CD8-positive, alpha-beta T cell (primary cell): ENCODE measurements at regions of chr3 and their contacts with region 1.

Region 1: GRCh38 chr3:107522510-107523288 is at the start of gene BBX:
- DNase-seq: peak; percentile 83 to 98 (median 91)
- ATAC-seq: peak; percentile 91
- H3K4me3 ChIP-seq: peak within 1 kb of the TSS; percentile 77 to 86
- H3K4me3 Mint-ChIP-seq: peak within 1 kb of the TSS; percentile 99
- H3K27ac ChIP-seq: peak within 1 kb of the TSS; percentile 47 to 69
- H3K27ac Mint-ChIP-seq: peak within 1 kb of the TSS; percentile 99
- H3K4me1 ChIP-seq: peaks cover 19% of the 10 kb centered on the region
- H3K4me1 Mint-ChIP-seq: peaks cover 32% of the 10 kb centered on the region
- H3K27me3 ChIP-seq: no peaks in the 10 kb centered on the region
- H3K27me3 Mint-ChIP-seq: no peaks in the 10 kb centered on the region
- CTCF ChIP-seq: no peak
- total RNA-seq, gene BBX: 71.3 to 77.9 TPM

Region 2: GRCh38 chr3:105876780-105877327 is 1645.8 kb before region 1 on chr3:
- CTCF ChIA-PET with region 1: no interaction called
- POLR2A ChIA-PET with region 1: no interaction called
- intact Hi-C with region 1: loop called in 1 of 2 experiments (anchors 10 kb)
- DNase-seq: peak in 2 of 9 experiments; percentile 48 to 63
- ATAC-seq: peak; percentile 76
- H3K4me3 ChIP-seq: peak overlapping the region in 1 of 2 experiments; percentile 11
- H3K4me3 Mint-ChIP-seq: peak overlapping the region; percentile 74
- H3K27ac ChIP-seq: peak overlapping the region in 1 of 2 experiments; percentile 59
- H3K27ac Mint-ChIP-seq: peak overlapping the region; percentile 86
- H3K4me1 ChIP-seq: peaks cover 19% of the 10 kb centered on the region
- H3K4me1 Mint-ChIP-seq: peaks cover 31% of the 10 kb centered on the region
- H3K27me3 ChIP-seq: no peaks in the 10 kb centered on the region
- H3K27me3 Mint-ChIP-seq: no peaks in the 10 kb centered on the region
- CTCF ChIP-seq: no peak

Region 3: DNA sequence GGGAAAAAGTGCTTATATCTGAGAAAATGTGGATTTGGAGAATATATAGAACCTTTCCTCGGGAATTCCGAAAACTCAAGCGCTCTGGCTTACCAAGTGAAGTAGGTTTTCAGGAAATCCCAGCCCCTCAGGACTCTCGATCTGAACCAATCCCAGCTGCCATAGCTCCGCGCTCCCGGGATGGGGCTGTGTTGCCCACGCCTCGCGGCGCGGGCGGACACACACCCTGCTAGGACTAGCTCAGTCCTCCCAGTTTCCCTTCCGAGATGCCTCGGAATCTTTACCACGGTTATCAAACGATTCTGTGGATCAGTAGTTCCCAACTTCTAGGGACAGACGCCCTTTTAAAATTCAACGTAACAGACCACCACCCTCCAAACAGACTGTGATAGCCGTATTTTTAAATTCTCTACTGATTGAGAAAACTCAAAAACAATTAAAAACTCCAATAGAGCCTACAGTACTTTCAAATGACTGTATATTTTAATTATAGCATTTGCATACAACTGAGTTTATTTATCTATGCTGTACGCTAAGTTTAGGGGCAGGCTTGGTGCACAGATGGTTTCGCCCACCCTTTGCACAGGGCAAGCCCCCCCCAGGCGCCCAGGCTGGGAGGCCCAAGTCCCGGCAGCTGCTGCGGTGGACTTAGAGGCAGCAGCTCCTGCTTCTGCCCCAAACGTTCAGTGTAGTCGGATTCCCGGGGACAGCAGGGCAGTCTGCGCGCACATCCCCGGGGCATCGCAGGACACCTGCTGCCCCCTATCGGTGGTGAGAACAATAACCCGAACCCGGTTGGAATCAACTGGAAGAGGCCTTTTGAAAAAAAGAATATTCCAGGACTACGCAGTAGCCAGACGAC is 93.1 kb before region 1 on chr3:
- CTCF ChIA-PET with region 1: no interaction called
- POLR2A ChIA-PET with region 1: interaction called, 3 read pairs
- intact Hi-C with region 1: loop called (anchors 2 kb)
- DNase-seq: peak; percentile 19 to 78 (median 47)
- ATAC-seq: peak; percentile 66
- H3K4me3 ChIP-seq: peak overlapping the region; percentile 57 to 69
- H3K4me3 Mint-ChIP-seq: peak overlapping the region; percentile 89
- H3K27ac ChIP-seq: no peak overlapping the region
- H3K27ac Mint-ChIP-seq: peak overlapping the region; percentile 14
- H3K4me1 ChIP-seq: peaks cover 11% of the 10 kb centered on the region
- H3K4me1 Mint-ChIP-seq: peaks cover 19% of the 10 kb centered on the region
- H3K27me3 ChIP-seq: peaks cover 0 to 3% of the 10 kb centered on the region in 2 experiments
- H3K27me3 Mint-ChIP-seq: peaks cover 13% of the 10 kb centered on the region
- CTCF ChIP-seq: peak; percentile 77

Region 4: DNA sequence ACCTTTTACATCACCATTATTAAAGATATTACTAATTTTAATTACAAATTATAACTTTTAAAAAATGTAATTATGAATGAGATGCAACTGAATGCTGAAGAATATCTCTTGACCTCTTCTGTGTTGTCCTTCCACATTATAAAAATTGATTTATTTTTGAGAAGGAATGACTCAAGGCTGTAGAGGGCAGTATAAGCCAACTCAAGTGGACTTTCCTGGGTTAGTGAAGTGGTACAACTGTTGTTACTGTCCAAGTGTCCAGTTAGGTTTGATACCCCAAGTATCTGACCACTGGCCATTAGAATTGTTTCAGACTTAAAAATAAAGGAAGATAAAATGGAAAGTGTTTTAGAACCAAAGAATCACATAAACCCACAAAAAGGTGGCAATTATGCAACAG is 52.0 kb after region 1 on chr3:
- CTCF ChIA-PET with region 1: no interaction called
- POLR2A ChIA-PET with region 1: no interaction called
- intact Hi-C with region 1: loop called in 1 of 2 experiments (anchors 5 kb)
- DNase-seq: peak in 2 of 9 experiments; percentile 30 to 42
- ATAC-seq: no peak
- H3K4me3 ChIP-seq: no peak overlapping the region
- H3K4me3 Mint-ChIP-seq: no peak overlapping the region
- H3K27ac ChIP-seq: no peak overlapping the region
- H3K27ac Mint-ChIP-seq: no peak overlapping the region
- H3K4me1 ChIP-seq: peaks cover 6% of the 10 kb centered on the region
- H3K4me1 Mint-ChIP-seq: peaks cover 46% of the 10 kb centered on the region
- H3K27me3 ChIP-seq: no peaks in the 10 kb centered on the region
- H3K27me3 Mint-ChIP-seq: no peaks in the 10 kb centered on the region
- CTCF ChIP-seq: peak; percentile 29

Region 5: GRCh38 chr3:108079877-108080659 is 557.4 kb after region 1 on chr3:
- CTCF ChIA-PET with region 1: no interaction called
- POLR2A ChIA-PET with region 1: no interaction called
- intact Hi-C with region 1: loop called in 1 of 2 experiments (anchors 5 kb)
- DNase-seq: peak in 1 of 9 experiments; percentile 39
- ATAC-seq: peak; percentile 59
- H3K4me3 ChIP-seq: no peak overlapping the region
- H3K4me3 Mint-ChIP-seq: peak overlapping the region; percentile 40
- H3K27ac ChIP-seq: peak overlapping the region in 1 of 2 experiments; percentile 41
- H3K27ac Mint-ChIP-seq: peak overlapping the region; percentile 81
- H3K4me1 ChIP-seq: peaks cover 86% of the 10 kb centered on the region
- H3K4me1 Mint-ChIP-seq: peaks cover 23% of the 10 kb centered on the region
- H3K27me3 ChIP-seq: no peaks in the 10 kb centered on the region
- H3K27me3 Mint-ChIP-seq: no peaks in the 10 kb centered on the region
- CTCF ChIP-seq: no peak

Region 6: GRCh38 chr3:108589146-108589997 is 1066.7 kb after region 1 on chr3 and contains the starts of genes CIP2A and DZIP3:
- CTCF ChIA-PET with region 1: no interaction called
- POLR2A ChIA-PET with region 1: interaction called, 3 read pairs
- intact Hi-C with region 1: loop called in 1 of 2 experiments (anchors 10 kb)
- DNase-seq: peak; percentile 71 to 96 (median 81)
- ATAC-seq: peak; percentile 79
- H3K4me3 ChIP-seq: peak within 1 kb of the TSS; percentile 90 to 93
- H3K4me3 Mint-ChIP-seq: peak within 1 kb of the TSS; percentile 97
- H3K27ac ChIP-seq: peak within 1 kb of the TSS; percentile 91 to 98
- H3K27ac Mint-ChIP-seq: peak within 1 kb of the TSS; percentile 99
- H3K4me1 ChIP-seq: peaks cover 14% of the 10 kb centered on the region
- H3K4me1 Mint-ChIP-seq: peaks cover 31% of the 10 kb centered on the region
- H3K27me3 ChIP-seq: no peaks in the 10 kb centered on the region
- H3K27me3 Mint-ChIP-seq: no peaks in the 10 kb centered on the region
- CTCF ChIP-seq: no peak
- total RNA-seq, gene CIP2A: 3.0 to 4.2 TPM
- total RNA-seq, gene DZIP3: 8.7 to 9.4 TPM